Posterior vena cava (tissue), 2 donors: ENCODE measurements at regions of chr5 and their contacts with region 1.

Region 1: GRCh38 chr5:128358826-128359225 is 179.2 kb downstream of the FBN2 start:
- DNase-seq: no peak

Region 2: DNA sequence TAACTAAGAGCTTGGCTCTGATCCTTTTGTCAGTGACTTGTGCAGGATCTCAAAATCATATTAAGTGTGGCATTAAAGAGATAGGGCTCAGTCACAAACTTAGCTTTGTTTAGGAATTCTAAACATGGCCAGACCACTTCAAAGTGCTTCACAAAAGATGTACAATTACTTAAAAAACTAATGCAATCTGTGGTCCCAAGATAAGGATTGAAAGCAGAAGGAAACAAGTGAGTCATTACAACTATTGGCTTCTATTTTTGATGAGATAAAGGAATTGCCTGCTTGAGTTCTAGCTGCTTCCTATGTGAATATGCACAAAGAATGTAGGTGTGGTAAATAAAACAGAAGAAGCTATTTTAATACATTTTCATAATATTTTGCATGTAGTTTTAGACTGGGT is 320.2 kb before region 1 on chr5:
- intact Hi-C with region 1: no loop called
- DNase-seq: no peak

Region 3: DNA sequence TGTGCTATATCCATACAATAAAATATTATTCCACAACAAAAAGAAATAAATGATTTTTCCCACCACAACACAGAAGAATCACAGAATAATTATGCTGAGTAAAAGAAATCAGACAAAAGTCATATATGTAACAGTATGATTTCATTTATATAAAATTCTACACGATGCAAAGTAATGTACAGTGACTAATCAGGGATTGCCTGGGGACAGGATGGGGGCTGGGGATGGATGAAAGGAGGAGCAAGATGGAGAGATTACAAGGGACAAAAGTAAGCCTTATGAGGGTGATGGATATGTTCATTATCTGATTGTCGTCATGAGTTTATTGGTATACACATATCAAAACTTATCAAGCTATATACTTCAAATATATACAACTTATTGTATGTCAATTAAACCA is 25.2 kb after region 1 on chr5:
- intact Hi-C with region 1: loop called in 1 of 2 experiments (anchors 2 kb)
- DNase-seq: no peak